MCF 10A (cell line): ENCODE measurements at regions of chr1 and their contacts with region 1.

Region 1: GRCh38 chr1:229156872-229157271 is 114.0 kb upstream of the RAB4A start:
- DNase-seq: peak; percentile 54
- H3K4me3 Mint-ChIP-seq: no peak overlapping the region
- H3K27ac Mint-ChIP-seq: no peak overlapping the region
- H3K4me1 Mint-ChIP-seq: no peaks in the 10 kb centered on the region
- H3K27me3 Mint-ChIP-seq: no peaks in the 10 kb centered on the region
- CTCF ChIP-seq: peak; percentile 58

Region 2: GRCh38 chr1:228691926-228692325 is 464.9 kb before region 1 on chr1:
- CTCF ChIA-PET with region 1: interaction called, 10 read pairs
- POLR2A ChIA-PET with region 1: interaction called, 3 read pairs
- intact Hi-C with region 1: loop called (anchors 1 kb)
- DNase-seq: peak; percentile 84
- H3K4me3 Mint-ChIP-seq: no peak overlapping the region
- H3K27ac Mint-ChIP-seq: no peak overlapping the region
- H3K4me1 Mint-ChIP-seq: peaks cover 18% of the 10 kb centered on the region
- H3K27me3 Mint-ChIP-seq: no peaks in the 10 kb centered on the region
- CTCF ChIP-seq: peak; percentile 85

Region 3: GRCh38 chr1:229003233-229004031 is 153.4 kb before region 1 on chr1:
- CTCF ChIA-PET with region 1: no interaction called
- POLR2A ChIA-PET with region 1: no interaction called
- intact Hi-C with region 1: loop called (anchors 10 kb)
- DNase-seq: peak; percentile 56
- H3K4me3 Mint-ChIP-seq: no peak overlapping the region
- H3K27ac Mint-ChIP-seq: no peak overlapping the region
- H3K4me1 Mint-ChIP-seq: peaks cover 19% of the 10 kb centered on the region
- H3K27me3 Mint-ChIP-seq: no peaks in the 10 kb centered on the region
- CTCF ChIP-seq: no peak